ENCODE measurements at regions of chr17 and their contacts with region 1.

Region 1: DNA sequence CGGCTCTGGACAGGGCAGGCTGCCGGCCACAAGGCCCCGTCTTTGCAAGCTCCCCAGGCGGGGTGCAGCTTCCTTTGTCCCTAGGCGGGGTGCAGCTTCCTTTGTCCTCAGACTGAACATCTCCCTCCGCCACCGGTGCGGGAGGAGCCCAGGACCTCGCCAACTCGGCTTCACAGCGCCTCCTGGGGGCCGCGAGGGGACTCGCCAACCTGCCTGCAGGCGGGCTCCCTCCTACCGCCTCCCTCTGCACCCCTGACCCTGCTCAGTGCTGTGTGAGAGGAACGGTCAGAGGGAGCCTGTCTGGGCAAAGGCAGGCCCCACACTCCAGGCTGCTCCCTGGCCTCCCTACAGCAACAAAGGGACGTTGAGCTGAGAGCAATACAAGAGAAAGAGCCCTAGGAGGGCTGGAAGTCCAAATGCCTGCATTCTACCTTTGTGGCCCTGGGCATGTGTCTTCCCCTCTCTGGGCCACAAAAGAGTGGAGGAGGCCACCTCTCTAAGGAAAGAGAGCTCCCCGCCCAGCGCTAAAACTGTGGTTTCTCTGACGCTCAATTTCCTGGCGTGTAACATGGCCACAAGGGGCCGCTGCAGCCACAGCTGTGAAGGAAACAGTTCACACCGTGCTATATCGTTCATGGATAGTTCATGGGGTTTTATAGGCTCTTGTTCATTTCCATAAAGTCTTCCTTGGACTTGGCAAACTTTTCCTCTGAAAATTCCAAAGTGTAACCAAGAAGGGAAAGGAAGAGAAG is 20.9 kb upstream of the KRT19 start:
- DNase-seq: peak; percentile 73 to 91 (median 82)
- ATAC-seq: peak; percentile 85
- H3K4me3 ChIP-seq: peak overlapping the region; percentile 42
- H3K4me3 Mint-ChIP-seq: peak overlapping the region; percentile 2
- H3K27ac ChIP-seq: no peak overlapping the region
- H3K27ac Mint-ChIP-seq: peak overlapping the region; percentile 65
- H3K4me1 ChIP-seq: peaks cover 23% of the 10 kb centered on the region
- H3K4me1 Mint-ChIP-seq: peaks cover 9% of the 10 kb centered on the region
- H3K27me3 ChIP-seq: no peaks in the 10 kb centered on the region
- H3K27me3 Mint-ChIP-seq: peaks cover 15% of the 10 kb centered on the region
- CTCF ChIP-seq: peak; percentile 96

Region 2: DNA sequence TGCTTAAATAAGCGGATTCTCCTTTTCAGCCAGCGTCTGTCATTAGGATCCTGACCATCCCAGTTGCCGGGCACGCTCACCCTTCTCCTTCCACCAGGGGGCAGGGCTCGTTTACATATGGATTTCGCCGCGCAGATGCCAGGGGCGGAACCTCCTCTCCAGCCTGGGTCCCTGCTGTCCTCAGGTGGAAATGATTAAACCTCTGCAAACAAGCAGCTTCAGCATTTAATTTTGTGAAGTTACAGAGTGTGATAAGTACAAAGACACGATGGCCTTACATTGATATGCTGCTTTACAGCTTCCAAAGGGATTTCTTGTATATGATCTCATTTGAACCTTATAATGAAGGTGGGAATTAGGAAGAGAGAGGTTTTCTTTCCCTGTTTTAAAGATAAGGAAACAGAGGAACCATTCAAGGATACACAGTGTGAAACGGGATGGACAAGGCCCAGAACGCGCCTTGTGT is 745.4 kb before region 1 on chr17:
- CTCF ChIA-PET with region 1: no interaction called
- POLR2A ChIA-PET with region 1: no interaction called
- intact Hi-C with region 1: loop called (anchors 2 to 10 kb)
- DNase-seq: peak; percentile 51 to 85 (median 66)
- ATAC-seq: peak; percentile 89
- H3K4me3 ChIP-seq: no peak overlapping the region
- H3K4me3 Mint-ChIP-seq: no peak overlapping the region
- H3K27ac ChIP-seq: no peak overlapping the region
- H3K27ac Mint-ChIP-seq: no peak overlapping the region
- H3K4me1 ChIP-seq: no peaks in the 10 kb centered on the region
- H3K4me1 Mint-ChIP-seq: peaks cover 4% of the 10 kb centered on the region
- H3K27me3 ChIP-seq: peaks cover 11 to 58% of the 10 kb centered on the region in 2 experiments
- H3K27me3 Mint-ChIP-seq: peaks cover 54% of the 10 kb centered on the region
- CTCF ChIP-seq: peak; percentile 91

Region 3: GRCh38 chr17:40909351-40909750 is 639.7 kb before region 1 on chr17:
- CTCF ChIA-PET with region 1: interaction called, 20 read pairs
- POLR2A ChIA-PET with region 1: interaction called, 3 read pairs
- intact Hi-C with region 1: loop called (anchors 1 to 2 kb)
- DNase-seq: peak; percentile 38 to 85 (median 58)
- ATAC-seq: peak; percentile 91
- H3K4me3 ChIP-seq: no peak overlapping the region
- H3K4me3 Mint-ChIP-seq: no peak overlapping the region
- H3K27ac ChIP-seq: no peak overlapping the region
- H3K27ac Mint-ChIP-seq: no peak overlapping the region
- H3K4me1 ChIP-seq: no peaks in the 10 kb centered on the region
- H3K4me1 Mint-ChIP-seq: no peaks in the 10 kb centered on the region
- H3K27me3 ChIP-seq: peaks cover 2 to 25% of the 10 kb centered on the region in 2 experiments
- H3K27me3 Mint-ChIP-seq: peaks cover 59% of the 10 kb centered on the region
- CTCF ChIP-seq: peak; percentile 82

Region 4: DNA sequence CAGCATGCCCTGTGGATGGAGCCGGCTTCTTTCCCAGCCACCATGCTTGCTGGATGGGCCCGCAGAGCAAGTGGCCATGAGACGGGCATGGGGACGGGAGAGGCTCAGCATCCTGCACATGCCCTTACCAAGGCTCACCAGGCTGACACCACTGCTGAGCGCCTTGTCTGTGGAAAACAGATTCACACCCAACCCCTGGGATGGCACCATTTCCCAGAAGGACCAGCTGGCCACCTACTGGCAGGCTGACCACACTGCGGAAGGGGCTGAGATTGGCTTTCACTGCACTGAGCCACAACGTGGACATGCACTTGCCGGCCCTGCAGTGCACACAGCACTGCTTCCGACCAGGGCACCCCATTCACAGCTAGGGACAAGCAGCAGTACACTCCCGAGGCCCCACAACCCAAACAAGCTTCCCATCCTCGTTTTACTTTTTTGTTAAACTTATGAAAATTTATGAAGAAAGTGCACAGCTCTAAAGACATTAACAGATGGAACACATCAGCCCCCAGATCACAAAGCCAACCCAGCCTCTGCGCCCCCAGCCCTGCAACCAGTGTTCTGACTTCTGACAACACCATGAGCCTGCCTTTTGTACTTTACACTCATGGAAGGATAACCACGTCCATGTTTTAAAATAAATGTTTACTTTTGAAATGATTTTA is 219.6 kb before region 1 on chr17:
- CTCF ChIA-PET with region 1: interaction called, 3 read pairs
- POLR2A ChIA-PET with region 1: no interaction called
- intact Hi-C with region 1: loop called in 1 of 2 experiments (anchors 5 kb)
- DNase-seq: peak in 3 of 14 experiments; percentile 39 to 49 (median 45)
- ATAC-seq: no peak
- H3K4me3 ChIP-seq: no peak overlapping the region
- H3K4me3 Mint-ChIP-seq: no peak overlapping the region
- H3K27ac ChIP-seq: no peak overlapping the region
- H3K27ac Mint-ChIP-seq: no peak overlapping the region
- H3K4me1 ChIP-seq: peaks cover 65% of the 10 kb centered on the region
- H3K4me1 Mint-ChIP-seq: peaks cover 49% of the 10 kb centered on the region
- H3K27me3 ChIP-seq: no peaks in the 10 kb centered on the region
- H3K27me3 Mint-ChIP-seq: no peaks in the 10 kb centered on the region
- CTCF ChIP-seq: peak; percentile 23

Region 5: GRCh38 chr17:41648411-41649195 is 99.6 kb after region 1 on chr17:
- CTCF ChIA-PET with region 1: interaction called, 18 read pairs
- POLR2A ChIA-PET with region 1: interaction called, 16 read pairs
- intact Hi-C with region 1: loop called (anchors 1 kb)
- DNase-seq: peak; percentile 70 to 92 (median 82)
- ATAC-seq: peak; percentile 88
- H3K4me3 ChIP-seq: peak overlapping the region; percentile 67
- H3K4me3 Mint-ChIP-seq: peak overlapping the region; percentile 86
- H3K27ac ChIP-seq: no peak overlapping the region
- H3K27ac Mint-ChIP-seq: peak overlapping the region; percentile 50
- H3K4me1 ChIP-seq: peaks cover 15% of the 10 kb centered on the region
- H3K4me1 Mint-ChIP-seq: peaks cover 12% of the 10 kb centered on the region
- H3K27me3 ChIP-seq: no peaks in the 10 kb centered on the region
- H3K27me3 Mint-ChIP-seq: no peaks in the 10 kb centered on the region
- CTCF ChIP-seq: peak; percentile 81

Region 6: DNA sequence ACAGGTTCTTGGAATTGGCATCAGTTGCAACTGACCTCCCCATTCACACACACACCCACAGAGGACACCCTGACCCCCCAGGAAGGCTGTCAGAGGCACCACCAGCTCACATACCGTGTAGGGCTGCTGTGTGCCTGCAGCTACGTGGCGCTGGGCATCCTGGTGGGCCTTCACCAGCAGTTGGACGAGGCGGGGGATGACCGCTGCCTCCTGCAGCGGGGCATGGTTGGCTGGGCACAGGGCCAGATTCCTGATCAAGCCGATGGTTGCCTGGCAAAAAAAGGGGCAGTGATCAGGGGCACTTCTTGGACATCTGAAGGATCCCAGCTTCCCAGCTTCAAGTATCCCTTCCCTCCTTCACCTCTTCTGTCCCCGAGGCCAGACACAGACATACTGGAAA is 209.6 kb after region 1 on chr17:
- CTCF ChIA-PET with region 1: no interaction called
- POLR2A ChIA-PET with region 1: no interaction called
- intact Hi-C with region 1: no loop called
- DNase-seq: no peak
- ATAC-seq: no peak
- H3K4me3 ChIP-seq: no peak overlapping the region
- H3K4me3 Mint-ChIP-seq: no peak overlapping the region
- H3K27ac ChIP-seq: no peak overlapping the region
- H3K27ac Mint-ChIP-seq: no peak overlapping the region
- H3K4me1 ChIP-seq: no peaks in the 10 kb centered on the region
- H3K4me1 Mint-ChIP-seq: no peaks in the 10 kb centered on the region
- H3K27me3 ChIP-seq: no peaks in the 10 kb centered on the region
- H3K27me3 Mint-ChIP-seq: no peaks in the 10 kb centered on the region
- CTCF ChIP-seq: no peak

Measured in CD4-positive, alpha-beta T cell (primary cell).